Right ventricle myocardium inferior (tissue), 1 donor: ENCODE measurements at regions of chr4 and their contacts with region 1.

Region 1: GRCh38 chr4:10013722-10014121 is 7.6 kb downstream of the SLC2A9 start:
- DNase-seq: no peak
- ATAC-seq: peak; percentile 47

Region 2: DNA sequence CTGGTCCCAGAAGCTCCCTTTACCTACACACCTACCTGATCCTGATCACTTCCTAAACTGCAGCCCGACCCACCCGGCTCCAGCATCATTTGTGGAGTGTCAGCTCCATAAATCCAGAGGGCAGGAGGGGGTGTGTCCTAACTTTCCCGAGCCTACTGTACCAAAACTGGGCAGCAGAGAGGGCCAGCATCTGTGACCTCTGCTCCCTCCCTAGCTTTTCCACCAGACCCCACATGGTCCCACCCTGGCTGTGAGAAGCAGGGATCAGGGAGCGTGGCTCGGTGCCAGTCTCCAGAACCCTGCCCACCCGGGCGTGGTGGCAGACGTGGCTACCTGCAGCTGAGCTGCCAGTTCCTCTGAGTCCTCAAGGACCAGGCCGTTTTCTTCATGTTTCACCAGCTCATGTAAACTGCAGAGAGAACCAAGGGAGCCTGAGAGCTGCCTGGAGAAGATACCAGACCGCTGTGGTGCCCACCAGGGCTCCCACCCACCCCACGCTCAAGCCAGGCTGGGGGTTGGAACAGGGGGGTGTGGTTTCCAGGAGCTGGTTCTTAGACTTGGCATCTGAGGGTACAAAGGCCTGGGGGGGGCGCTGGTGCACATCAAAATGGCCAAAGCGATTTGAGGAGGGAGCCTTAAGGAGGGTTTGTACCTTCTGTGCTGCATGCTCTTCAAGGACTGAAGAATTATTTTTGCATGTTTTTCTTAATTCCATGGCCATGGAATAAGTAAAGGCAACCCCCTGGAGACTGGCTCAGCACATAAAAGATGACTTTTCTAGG is 309.0 kb before region 1 on chr4:
- intact Hi-C with region 1: loop called (anchors 5 kb)
- DNase-seq: no peak
- ATAC-seq: no peak

Region 3: GRCh38 chr4:9812501-9813340 is 201.0 kb before region 1 on chr4:
- intact Hi-C with region 1: no loop called
- DNase-seq: no peak
- ATAC-seq: peak; percentile 59